T-cell (primary cell): ENCODE measurements at regions of chr14 and their contacts with region 1.

Region 1: GRCh38 chr14:90319173-90319572 is 12.6 kb downstream of the NRDE2 start:
- DNase-seq: no peak
- ATAC-seq: no peak
- H3K4me3 ChIP-seq: no peak overlapping the region
- H3K4me3 Mint-ChIP-seq: no peak overlapping the region
- H3K27ac ChIP-seq: no peak overlapping the region
- H3K27ac Mint-ChIP-seq: no peak overlapping the region
- H3K4me1 ChIP-seq: no peaks in the 10 kb centered on the region
- H3K4me1 Mint-ChIP-seq: peaks cover 23 to 33% (median 31%) of the 10 kb centered on the region in 3 donors
- H3K27me3 ChIP-seq: no peaks in the 10 kb centered on the region
- H3K27me3 Mint-ChIP-seq: no peaks in the 10 kb centered on the region

Region 2: DNA sequence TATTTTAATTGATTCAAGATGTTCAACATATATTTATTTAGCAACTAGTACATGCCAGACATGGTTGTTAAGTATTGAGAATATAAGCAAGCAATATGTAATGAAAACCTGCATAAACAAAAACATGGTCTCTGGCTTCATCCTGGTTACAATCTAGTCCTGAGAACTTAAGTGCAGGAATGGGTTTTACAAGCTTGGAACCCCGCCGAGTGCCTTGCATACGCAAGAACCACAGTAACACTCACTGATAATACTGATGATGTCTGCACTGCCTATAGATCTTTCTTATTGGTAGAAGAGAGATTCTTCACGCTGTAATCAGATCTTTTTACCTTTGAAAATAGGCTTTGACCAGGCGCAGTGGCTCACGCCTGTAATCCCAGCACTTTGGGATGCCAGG is 54.7 kb after region 1 on chr14:
- CTCF ChIA-PET with region 1: no interaction called
- POLR2A ChIA-PET with region 1: interaction called in 1 of 2 experiments, 11 read pairs
- DNase-seq: no peak
- ATAC-seq: no peak
- H3K4me3 ChIP-seq: no peak overlapping the region
- H3K4me3 Mint-ChIP-seq: no peak overlapping the region
- H3K27ac ChIP-seq: no peak overlapping the region
- H3K27ac Mint-ChIP-seq: no peak overlapping the region
- H3K4me1 ChIP-seq: no peaks in the 10 kb centered on the region
- H3K4me1 Mint-ChIP-seq: peaks cover 0 to 5% (median 3%) of the 10 kb centered on the region in 3 donors
- H3K27me3 ChIP-seq: peaks cover 0 to 3% of the 10 kb centered on the region in 2 experiments
- H3K27me3 Mint-ChIP-seq: no peaks in the 10 kb centered on the region

Region 3: GRCh38 chr14:91599994-91600393 is 1280.8 kb after region 1 on chr14:
- CTCF ChIA-PET with region 1: no interaction called
- POLR2A ChIA-PET with region 1: interaction called in 1 of 2 experiments, 10 read pairs
- DNase-seq: no peak
- ATAC-seq: no peak
- H3K4me3 ChIP-seq: no peak overlapping the region
- H3K4me3 Mint-ChIP-seq: no peak overlapping the region
- H3K27ac ChIP-seq: no peak overlapping the region
- H3K27ac Mint-ChIP-seq: no peak overlapping the region
- H3K4me1 ChIP-seq: no peaks in the 10 kb centered on the region
- H3K4me1 Mint-ChIP-seq: no peaks in the 10 kb centered on the region
- H3K27me3 ChIP-seq: no peaks in the 10 kb centered on the region
- H3K27me3 Mint-ChIP-seq: no peaks in the 10 kb centered on the region

Region 4: GRCh38 chr14:91649930-91650329 is 1330.8 kb after region 1 on chr14:
- CTCF ChIA-PET with region 1: no interaction called
- POLR2A ChIA-PET with region 1: no interaction called
- DNase-seq: peak in 10 of 35 experiments; percentile 2 to 54 (median 8)
- ATAC-seq: no peak
- H3K4me3 ChIP-seq: no peak overlapping the region
- H3K4me3 Mint-ChIP-seq: no peak overlapping the region
- H3K27ac ChIP-seq: no peak overlapping the region
- H3K27ac Mint-ChIP-seq: no peak overlapping the region
- H3K4me1 ChIP-seq: no peaks in the 10 kb centered on the region
- H3K4me1 Mint-ChIP-seq: peaks cover 3 to 14% (median 3%) of the 10 kb centered on the region in 3 donors
- H3K27me3 ChIP-seq: peaks cover 0 to 2% of the 10 kb centered on the region in 2 experiments
- H3K27me3 Mint-ChIP-seq: no peaks in the 10 kb centered on the region